ENCODE measurements at regions of chr21 and their contacts with region 1.

Region 1: GRCh38 chr21:31974454-31974985 is 101.7 kb downstream of the HUNK start:
- DNase-seq: peak in 6 of 9 donors; percentile 15 to 40 (median 19)
- ATAC-seq: peak; percentile 54
- H3K4me3 ChIP-seq: no peak overlapping the region
- H3K4me3 Mint-ChIP-seq: peak overlapping the region in 5 of 10 donors; percentile 43 to 57 (median 52)
- H3K27ac ChIP-seq: no peak overlapping the region
- H3K27ac Mint-ChIP-seq: peak overlapping the region in 2 of 9 donors; percentile 16 to 81
- H3K4me1 ChIP-seq: peaks cover 0 to 6% of the 10 kb centered on the region in 2 donors
- H3K4me1 Mint-ChIP-seq: peaks cover 1 to 22% (median 11%) of the 10 kb centered on the region in 7 donors
- H3K27me3 ChIP-seq: no peaks in the 10 kb centered on the region
- H3K27me3 Mint-ChIP-seq: peaks cover 6 to 25% (median 14%) of the 10 kb centered on the region in 5 donors

Region 2: GRCh38 chr21:31873696-31874599 is 100.6 kb before region 1 on chr21:
- CTCF ChIA-PET with region 1: no interaction called
- POLR2A ChIA-PET with region 1: no interaction called
- intact Hi-C with region 1: loop called in 1 of 2 experiments (anchors 10 kb)
- DNase-seq: peak in 3 of 9 donors; percentile 9 to 65 (median 9)
- ATAC-seq: peak; percentile 40
- H3K4me3 ChIP-seq: no peak overlapping the region
- H3K4me3 Mint-ChIP-seq: peak overlapping the region in 7 of 10 donors; percentile 29 to 86 (median 51)
- H3K27ac ChIP-seq: no peak overlapping the region
- H3K27ac Mint-ChIP-seq: no peak overlapping the region
- H3K4me1 ChIP-seq: no peaks in the 10 kb centered on the region
- H3K4me1 Mint-ChIP-seq: peaks cover 5 to 15% (median 11%) of the 10 kb centered on the region in 7 donors
- H3K27me3 ChIP-seq: peaks cover 0 to 4% of the 10 kb centered on the region in 2 donors
- H3K27me3 Mint-ChIP-seq: peaks cover 47 to 65% (median 55%) of the 10 kb centered on the region in 5 donors

Region 3: GRCh38 chr21:31927689-31928353 is 46.7 kb before region 1 on chr21:
- CTCF ChIA-PET with region 1: no interaction called
- POLR2A ChIA-PET with region 1: no interaction called
- intact Hi-C with region 1: loop called in 1 of 2 experiments (anchors 1 kb)
- DNase-seq: no peak
- ATAC-seq: no peak
- H3K4me3 ChIP-seq: no peak overlapping the region
- H3K4me3 Mint-ChIP-seq: no peak overlapping the region
- H3K27ac ChIP-seq: no peak overlapping the region
- H3K27ac Mint-ChIP-seq: no peak overlapping the region
- H3K4me1 ChIP-seq: no peaks in the 10 kb centered on the region
- H3K4me1 Mint-ChIP-seq: no peaks in the 10 kb centered on the region
- H3K27me3 ChIP-seq: no peaks in the 10 kb centered on the region
- H3K27me3 Mint-ChIP-seq: peaks cover 2 to 33% (median 21%) of the 10 kb centered on the region in 5 donors

Region 4: DNA sequence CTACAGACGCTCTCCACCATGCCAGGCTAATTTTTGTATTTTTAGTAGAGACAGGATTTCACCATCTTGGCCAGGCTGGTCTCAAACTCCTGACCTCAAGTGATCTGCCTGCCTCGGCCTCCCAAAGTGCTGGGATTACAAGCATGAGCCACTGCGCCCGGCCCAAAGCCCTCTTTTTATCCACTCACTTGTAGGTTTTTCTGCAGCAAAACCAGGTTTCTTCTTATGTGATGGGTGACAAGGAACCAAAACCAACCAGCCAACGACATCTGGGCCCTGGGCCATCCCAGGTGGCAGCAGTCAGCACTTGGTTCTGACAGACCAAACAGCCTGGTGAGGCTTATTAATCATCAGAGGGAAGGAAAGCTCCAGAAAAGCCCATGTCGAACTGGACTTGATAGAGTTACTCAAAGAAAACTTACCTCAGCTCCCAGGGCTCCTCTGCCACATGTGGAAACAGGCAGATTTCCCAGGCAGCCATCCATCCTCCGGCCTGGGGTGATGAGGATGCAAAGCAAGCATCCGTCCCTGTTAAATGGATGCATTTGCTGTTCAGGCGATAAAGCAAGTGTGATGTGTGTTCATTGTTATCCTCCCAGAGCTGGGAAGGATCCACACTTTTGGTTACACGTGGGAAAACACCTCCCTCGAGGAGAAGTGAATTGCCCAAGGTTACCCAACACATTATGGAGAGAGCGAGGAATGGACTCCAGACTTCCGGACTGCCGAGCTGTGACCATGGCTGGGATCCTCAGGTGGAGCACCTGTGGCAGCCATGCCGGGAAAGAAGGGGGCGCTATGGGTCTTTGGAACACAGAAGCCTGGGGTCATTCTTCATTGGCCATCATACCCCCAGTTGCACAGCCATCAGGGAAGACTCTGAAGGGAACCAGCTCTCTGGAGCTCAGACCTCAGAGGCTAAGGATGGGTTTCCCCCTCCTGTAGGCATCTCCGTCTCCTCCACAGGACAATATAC is 17.1 kb after region 1 on chr21:
- CTCF ChIA-PET with region 1: no interaction called
- POLR2A ChIA-PET with region 1: no interaction called
- intact Hi-C with region 1: no loop called
- DNase-seq: no peak
- ATAC-seq: no peak
- H3K4me3 ChIP-seq: no peak overlapping the region
- H3K4me3 Mint-ChIP-seq: no peak overlapping the region
- H3K27ac ChIP-seq: no peak overlapping the region
- H3K27ac Mint-ChIP-seq: peak overlapping the region in 1 of 9 donors; percentile 77
- H3K4me1 ChIP-seq: no peaks in the 10 kb centered on the region
- H3K4me1 Mint-ChIP-seq: no peaks in the 10 kb centered on the region
- H3K27me3 ChIP-seq: no peaks in the 10 kb centered on the region
- H3K27me3 Mint-ChIP-seq: peaks cover 0 to 26% (median 20%) of the 10 kb centered on the region in 5 donors

Region 5: DNA sequence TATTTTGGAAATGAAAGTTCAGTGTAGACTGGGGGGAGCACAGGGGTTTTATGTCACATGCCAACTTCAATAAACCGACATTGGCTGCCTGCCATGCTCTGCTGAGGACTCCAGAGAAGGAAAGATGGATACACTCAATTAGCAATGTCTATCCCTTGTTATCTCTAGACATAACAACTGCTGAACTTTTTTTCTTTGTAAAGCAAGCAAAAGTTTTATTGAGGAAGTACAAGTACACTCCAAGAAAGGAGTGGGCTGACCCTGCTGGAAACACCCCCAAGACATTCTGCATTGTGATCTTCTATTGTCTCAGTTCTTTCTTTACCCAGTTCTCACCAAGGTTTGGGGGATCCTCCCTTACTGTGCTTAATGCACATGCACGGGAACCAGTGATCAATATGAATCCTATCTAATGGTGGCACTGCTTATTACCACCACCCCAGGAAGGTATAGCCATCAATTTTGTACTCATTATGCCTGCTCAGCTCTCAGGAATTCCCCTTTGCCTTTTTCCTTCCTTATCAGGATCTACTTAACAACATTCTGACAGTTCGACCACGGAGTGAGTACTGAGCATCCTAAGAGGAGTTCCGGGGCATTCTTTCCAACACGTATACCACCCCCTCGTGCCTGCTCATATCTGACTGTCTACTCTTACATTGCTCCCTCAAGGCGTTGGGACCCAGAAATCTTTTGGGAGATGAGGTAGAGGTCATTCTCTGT is 724.6 kb after region 1 on chr21:
- CTCF ChIA-PET with region 1: no interaction called
- POLR2A ChIA-PET with region 1: no interaction called
- intact Hi-C with region 1: no loop called
- DNase-seq: no peak
- ATAC-seq: no peak
- H3K4me3 ChIP-seq: no peak overlapping the region
- H3K4me3 Mint-ChIP-seq: no peak overlapping the region
- H3K27ac ChIP-seq: no peak overlapping the region
- H3K27ac Mint-ChIP-seq: peak overlapping the region in 1 of 9 donors; percentile 49
- H3K4me1 ChIP-seq: no peaks in the 10 kb centered on the region
- H3K4me1 Mint-ChIP-seq: peaks cover 6 to 18% (median 11%) of the 10 kb centered on the region in 7 donors
- H3K27me3 ChIP-seq: no peaks in the 10 kb centered on the region
- H3K27me3 Mint-ChIP-seq: no peaks in the 10 kb centered on the region